ENCODE measurements at regions of chr1 and their contacts with region 1.

Region 1: GRCh38 chr1:8047681-8048445 is 21.8 kb upstream of the ERRFI1 start:
- DNase-seq: peak; percentile 81
- ATAC-seq: peak; percentile 56
- H3K4me3 ChIP-seq: peak overlapping the region in 1 of 2 experiments; percentile 5; a peak in 1 of 4 replicates
- H3K27ac ChIP-seq: peak overlapping the region; percentile 92
- H3K4me1 ChIP-seq: peaks cover 70 to 85% of the 10 kb centered on the region in 2 experiments
- H3K27me3 ChIP-seq: no peaks in the 10 kb centered on the region
- CTCF ChIP-seq: no peak
- POLR2A ChIP-seq: no peak
- RAD21 ChIP-seq: no peak; the same call in 1 of the 2 replicates

Region 2: DNA sequence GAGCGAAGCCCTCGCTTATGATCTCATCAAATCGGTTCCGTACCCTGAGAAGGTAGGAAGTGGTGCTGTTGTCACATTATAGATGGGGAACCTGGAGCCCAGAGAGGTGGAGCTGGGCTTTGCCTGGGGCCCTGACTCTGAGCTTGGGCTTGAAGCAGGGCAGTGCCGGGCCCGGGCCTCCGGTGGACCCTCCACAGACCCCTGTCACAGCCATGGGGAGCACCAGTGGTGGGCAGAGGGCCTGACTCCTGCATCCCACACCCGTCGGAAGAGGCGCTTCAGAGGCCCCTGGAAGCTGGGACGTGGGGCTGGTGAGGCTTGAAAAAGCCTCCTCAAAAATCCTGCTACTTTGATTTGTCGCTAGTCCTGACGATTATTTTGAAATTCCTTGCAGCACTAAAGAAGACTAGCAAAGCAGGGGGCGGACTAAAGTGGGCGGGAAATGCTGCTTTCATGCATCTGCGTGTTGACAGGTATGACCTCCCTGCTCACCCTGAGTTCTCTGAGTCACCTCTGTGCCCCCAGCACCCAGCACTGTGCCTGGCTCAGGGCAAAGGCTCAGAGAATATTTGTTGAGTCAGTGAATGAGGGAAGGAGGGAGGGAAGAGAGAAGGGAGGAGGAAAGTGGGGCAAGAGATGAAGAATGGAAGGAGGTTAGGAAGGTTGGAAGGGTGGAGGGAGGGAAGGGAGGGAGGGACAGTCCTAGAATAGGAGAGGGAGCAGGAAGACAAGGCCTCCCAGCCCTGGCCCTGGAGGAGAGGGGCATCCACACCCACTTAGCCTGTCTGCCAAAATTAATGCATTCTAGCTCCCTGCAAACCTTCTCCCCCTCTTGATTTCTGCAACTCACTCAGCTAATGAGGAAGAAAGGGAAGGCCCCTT is 539.6 kb before region 1 on chr1:
- CTCF ChIA-PET with region 1: no interaction called
- POLR2A ChIA-PET with region 1: no interaction called
- RAD21 ChIA-PET with region 1: no interaction called
- intact Hi-C with region 1: no loop called
- DNase-seq: no peak
- ATAC-seq: no peak
- H3K4me3 ChIP-seq: no peak overlapping the region
- H3K27ac ChIP-seq: no peak overlapping the region
- H3K4me1 ChIP-seq: no peaks in the 10 kb centered on the region
- H3K27me3 ChIP-seq: no peaks in the 10 kb centered on the region
- CTCF ChIP-seq: no peak
- POLR2A ChIP-seq: no peak
- RAD21 ChIP-seq: no peak

Region 3: DNA sequence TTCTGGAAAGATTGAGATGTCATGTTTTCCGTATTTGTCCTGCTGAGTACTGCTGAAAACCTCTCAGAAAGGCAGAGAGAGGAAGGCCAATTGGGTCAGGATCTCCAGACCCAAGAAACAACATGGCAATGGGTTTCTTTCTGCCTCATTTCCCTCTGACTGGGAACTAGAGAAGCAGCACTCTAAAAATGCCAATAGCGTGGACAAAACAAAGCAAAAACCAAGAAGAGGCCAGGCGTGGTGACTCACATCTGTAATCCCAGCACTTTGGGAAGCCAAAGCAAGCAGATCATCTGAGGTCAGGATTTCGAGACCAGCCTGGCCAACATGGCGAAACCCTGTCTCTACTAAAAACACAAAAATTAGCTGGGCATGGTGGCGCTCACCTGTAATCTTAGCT is 125.6 kb before region 1 on chr1:
- CTCF ChIA-PET with region 1: no interaction called
- POLR2A ChIA-PET with region 1: no interaction called
- RAD21 ChIA-PET with region 1: no interaction called
- intact Hi-C with region 1: no loop called
- DNase-seq: no peak
- ATAC-seq: no peak
- H3K4me3 ChIP-seq: no peak overlapping the region
- H3K27ac ChIP-seq: no peak overlapping the region
- H3K4me1 ChIP-seq: peaks cover 0 to 7% of the 10 kb centered on the region in 2 experiments; a peak in 2 of 4 replicates
- H3K27me3 ChIP-seq: no peaks in the 10 kb centered on the region
- CTCF ChIP-seq: no peak
- POLR2A ChIP-seq: no peak
- RAD21 ChIP-seq: no peak

Region 4: GRCh38 chr1:8182034-8182761 is 134.3 kb after region 1 on chr1:
- CTCF ChIA-PET with region 1: no interaction called
- POLR2A ChIA-PET with region 1: interaction called, 3 read pairs
- RAD21 ChIA-PET with region 1: no interaction called
- intact Hi-C with region 1: loop called (anchors 5 kb)
- DNase-seq: peak; percentile 96
- ATAC-seq: peak; percentile 85
- H3K4me3 ChIP-seq: peak overlapping the region in 1 of 2 experiments; percentile 23; a peak in 2 of 4 replicates
- H3K27ac ChIP-seq: peak overlapping the region; percentile 97
- H3K4me1 ChIP-seq: peaks cover 41 to 59% of the 10 kb centered on the region in 2 experiments
- H3K27me3 ChIP-seq: no peaks in the 10 kb centered on the region
- CTCF ChIP-seq: no peak
- POLR2A ChIP-seq: no peak
- RAD21 ChIP-seq: no peak